Activated CD4-positive, alpha-beta memory T cell treated with anti-CD3 and anti-CD28 coated beads for 36 hours (primary cell): ENCODE measurements at regions of chr11 and their contacts with region 1.

Region 1: GRCh38 chr11:68784653-68785052 is 33.3 kb upstream of the TESMIN start:
- DNase-seq: no peak
- H3K4me3 Mint-ChIP-seq: no peak overlapping the region
- H3K27ac Mint-ChIP-seq: no peak overlapping the region
- H3K4me1 Mint-ChIP-seq: no peaks in the 10 kb centered on the region
- H3K27me3 Mint-ChIP-seq: no peaks in the 10 kb centered on the region

Region 2: GRCh38 chr11:68798221-68798813 is 13.7 kb after region 1 on chr11:
- CTCF ChIA-PET with region 1: interaction called, 16 read pairs
- POLR2A ChIA-PET with region 1: no interaction called
- intact Hi-C with region 1: no loop called
- DNase-seq: peak; percentile 53
- H3K4me3 Mint-ChIP-seq: no peak overlapping the region
- H3K27ac Mint-ChIP-seq: no peak overlapping the region
- H3K4me1 Mint-ChIP-seq: no peaks in the 10 kb centered on the region
- H3K27me3 Mint-ChIP-seq: no peaks in the 10 kb centered on the region

Region 3: GRCh38 chr11:70397983-70398833 is 1613.6 kb after region 1 on chr11 and contains the start of gene CTTN:
- CTCF ChIA-PET with region 1: no interaction called
- POLR2A ChIA-PET with region 1: no interaction called
- intact Hi-C with region 1: no loop called
- DNase-seq: peak; percentile 74
- H3K4me3 Mint-ChIP-seq: peak within 1 kb of the TSS; percentile 77
- H3K27ac Mint-ChIP-seq: peak within 1 kb of the TSS; percentile 73
- H3K4me1 Mint-ChIP-seq: peaks cover 29% of the 10 kb centered on the region
- H3K27me3 Mint-ChIP-seq: peaks cover 30% of the 10 kb centered on the region
- total RNA-seq, gene CTTN: 49.6 to 52.6 TPM